IMR-90 (cell line): ENCODE measurements at regions of chr2 and their contacts with region 1.

Region 1: DNA sequence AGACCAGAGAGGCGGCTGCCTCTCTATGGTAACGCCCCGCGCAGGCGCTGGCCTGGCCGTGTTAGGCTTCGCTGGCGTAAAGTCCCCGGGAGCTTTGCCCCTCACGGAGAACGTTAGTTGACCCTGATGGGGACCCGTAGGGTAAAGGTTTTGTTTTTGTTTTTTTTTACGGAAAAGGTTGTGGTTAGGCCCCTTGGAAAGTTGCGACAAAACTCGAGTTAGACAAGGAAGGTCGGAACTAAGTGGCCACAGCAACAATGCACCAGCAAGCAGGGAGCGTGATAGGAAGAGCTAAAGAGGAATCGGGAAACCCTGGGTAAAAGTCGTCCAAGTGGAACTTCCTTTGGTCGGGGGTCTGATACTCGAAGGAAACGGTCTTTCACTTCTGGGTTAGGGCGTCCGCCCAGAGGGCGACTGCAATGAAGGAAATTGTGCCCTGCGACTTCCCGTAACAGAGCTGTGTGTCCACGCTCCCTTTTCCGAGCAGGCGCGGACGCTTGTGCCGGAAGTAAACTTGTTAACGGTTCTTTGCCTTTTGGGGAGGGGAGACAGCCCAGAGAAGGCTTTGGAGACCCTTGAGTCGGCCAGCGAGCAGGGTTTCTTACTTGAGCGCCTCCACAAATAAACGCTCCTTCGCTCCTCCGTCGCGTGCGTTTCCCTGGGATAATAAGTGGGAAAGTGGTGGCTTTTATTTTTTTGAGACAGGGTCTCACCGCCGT is 493 bp upstream of the CLASP1 start:
- DNase-seq: peak; percentile 97
- ATAC-seq: peak; percentile 97
- H3K4me3 ChIP-seq: peak overlapping the region; percentile 72
- H3K27ac ChIP-seq: peak overlapping the region; percentile 96
- H3K4me1 ChIP-seq: peaks cover 6% of the 10 kb centered on the region; the same call in 1 of the 2 replicates
- H3K27me3 ChIP-seq: no peaks in the 10 kb centered on the region
- CTCF ChIP-seq: 0 out of 2 replicates have a peak, but pooled peaks have one; percentile 3
- POLR2A ChIP-seq: peak; percentile 69
- RAD21 ChIP-seq: peak; percentile 10; the same call in 1 of the 2 replicates

Region 2: GRCh38 chr2:121596221-121597080 is 53.3 kb before region 1 on chr2:
- CTCF ChIA-PET with region 1: interaction called, 3 read pairs
- POLR2A ChIA-PET with region 1: no interaction called
- dilution Hi-C with region 1: no loop called
- in situ Hi-C with region 1: no loop called
- intact Hi-C with region 1: loop called (anchors 5 kb)
- DNase-seq: peak; percentile 57
- ATAC-seq: peak; percentile 90
- H3K4me3 ChIP-seq: peak overlapping the region; percentile 9; the same call in 1 of the 2 replicates
- H3K27ac ChIP-seq: peak overlapping the region; percentile 33; the same call in 1 of the 2 replicates
- H3K4me1 ChIP-seq: peaks cover 7% of the 10 kb centered on the region
- H3K27me3 ChIP-seq: no peaks in the 10 kb centered on the region
- CTCF ChIP-seq: peak; percentile 50
- POLR2A ChIP-seq: no peak
- RAD21 ChIP-seq: peak; percentile 54

Region 3: GRCh38 chr2:121634354-121635307 is 15.1 kb before region 1 on chr2:
- CTCF ChIA-PET with region 1: no interaction called
- POLR2A ChIA-PET with region 1: interaction called, 14 read pairs
- dilution Hi-C with region 1: no loop called
- in situ Hi-C with region 1: no loop called
- intact Hi-C with region 1: no loop called
- DNase-seq: peak; percentile 66
- ATAC-seq: peak; percentile 91
- H3K4me3 ChIP-seq: no peak overlapping the region
- H3K27ac ChIP-seq: peak overlapping the region; percentile 95
- H3K4me1 ChIP-seq: peaks cover 10% of the 10 kb centered on the region
- H3K27me3 ChIP-seq: no peaks in the 10 kb centered on the region
- CTCF ChIP-seq: no peak
- POLR2A ChIP-seq: no peak
- RAD21 ChIP-seq: no peak

Region 4: DNA sequence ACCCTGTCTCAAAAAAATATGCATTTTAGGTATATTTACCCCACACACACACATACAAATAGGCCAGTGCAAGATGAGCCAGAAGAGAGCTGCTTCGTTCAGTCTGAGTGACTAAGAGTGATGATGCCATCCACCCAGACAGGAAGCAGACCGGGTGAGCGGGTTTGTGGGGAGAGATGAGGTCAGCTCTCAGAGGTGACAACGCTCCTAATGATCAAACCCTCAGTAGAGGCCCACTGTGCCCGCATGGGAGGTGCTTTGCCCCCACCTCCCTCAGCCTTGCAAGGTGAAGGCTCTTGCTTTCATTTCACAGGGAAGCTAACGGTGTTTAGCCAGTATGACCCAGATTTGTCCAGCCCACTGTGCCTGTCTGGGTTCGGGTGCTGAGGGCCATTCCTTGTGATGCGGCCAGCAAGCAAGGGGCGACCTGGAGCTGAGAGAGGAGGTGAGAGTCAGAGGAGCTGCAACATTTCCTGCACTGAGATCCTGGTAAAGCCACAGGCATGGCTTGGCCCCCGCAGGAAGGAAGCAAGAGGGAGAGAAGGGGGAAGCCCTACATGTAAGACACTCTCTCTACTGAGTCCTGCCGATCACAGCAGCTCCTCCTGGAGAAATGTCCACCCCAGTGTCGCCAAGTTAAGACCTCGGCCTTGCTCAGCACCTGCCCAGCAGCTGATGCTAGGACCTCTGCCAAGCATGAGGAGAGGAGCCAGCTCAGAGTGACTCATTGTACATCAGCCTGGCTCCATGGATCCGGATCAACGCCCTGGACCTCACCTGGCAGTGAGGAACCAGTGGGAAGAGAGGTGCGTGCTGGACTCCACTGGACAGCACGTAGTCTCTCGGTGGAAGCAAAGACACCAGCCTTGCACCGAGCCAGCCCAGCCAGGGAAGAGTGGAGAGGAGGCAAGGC is 49.9 kb after region 1 on chr2:
- CTCF ChIA-PET with region 1: no interaction called
- POLR2A ChIA-PET with region 1: no interaction called
- dilution Hi-C with region 1: no loop called
- in situ Hi-C with region 1: no loop called
- intact Hi-C with region 1: loop called (anchors 5 kb)
- DNase-seq: peak; percentile 84
- ATAC-seq: peak; percentile 89
- H3K4me3 ChIP-seq: no peak overlapping the region
- H3K27ac ChIP-seq: no peak overlapping the region
- H3K4me1 ChIP-seq: peaks cover 10% of the 10 kb centered on the region
- H3K27me3 ChIP-seq: no peaks in the 10 kb centered on the region
- CTCF ChIP-seq: no peak
- POLR2A ChIP-seq: no peak
- RAD21 ChIP-seq: no peak

Region 5: DNA sequence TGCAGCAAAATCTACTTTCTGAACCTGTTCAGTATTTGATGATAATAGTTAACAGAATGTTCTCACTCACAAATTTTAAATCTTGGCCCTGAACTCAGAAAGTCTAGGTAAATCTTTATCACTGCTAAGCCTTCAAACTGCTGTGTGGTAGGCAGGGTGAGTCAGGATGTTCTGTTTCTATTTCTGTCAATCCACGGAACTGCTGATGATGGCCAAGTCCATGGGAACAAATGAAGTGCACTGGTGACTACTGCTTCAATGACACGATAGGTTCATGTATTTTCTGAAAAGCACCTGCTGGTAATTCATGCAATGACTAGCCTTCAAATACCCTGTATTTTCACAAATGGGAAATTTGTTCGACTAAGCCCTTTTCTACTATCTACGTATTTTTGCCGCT is 72.7 kb after region 1 on chr2:
- CTCF ChIA-PET with region 1: no interaction called
- POLR2A ChIA-PET with region 1: no interaction called
- dilution Hi-C with region 1: no loop called
- in situ Hi-C with region 1: no loop called
- intact Hi-C with region 1: loop called (anchors 2 kb)
- DNase-seq: peak; percentile 87
- ATAC-seq: peak; percentile 55
- H3K4me3 ChIP-seq: no peak overlapping the region
- H3K27ac ChIP-seq: peak overlapping the region; percentile 59; the same call in 1 of the 2 replicates
- H3K4me1 ChIP-seq: peaks cover 6% of the 10 kb centered on the region; the same call in 1 of the 2 replicates
- H3K27me3 ChIP-seq: no peaks in the 10 kb centered on the region
- CTCF ChIP-seq: no peak; the same call in 1 of the 2 replicates
- POLR2A ChIP-seq: no peak
- RAD21 ChIP-seq: no peak

Region 6: DNA sequence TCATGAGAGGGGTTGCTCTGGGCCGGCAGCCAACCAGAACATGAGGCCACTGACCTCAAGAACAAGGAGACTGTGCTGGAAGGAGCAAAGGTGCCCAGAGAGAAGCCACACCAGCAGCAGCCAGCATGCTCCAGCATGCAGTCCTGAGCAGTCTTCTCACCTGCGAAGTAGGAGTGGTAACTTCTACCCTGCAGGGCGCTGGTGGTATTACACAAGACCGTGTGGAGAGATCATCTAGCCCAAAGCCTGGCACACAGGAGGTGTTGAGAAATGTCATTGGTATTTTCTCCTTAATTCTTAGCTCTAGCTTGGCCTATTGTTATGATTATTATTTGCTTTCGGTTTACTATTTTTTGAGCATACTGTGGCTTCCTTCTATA is 238.4 kb after region 1 on chr2:
- CTCF ChIA-PET with region 1: no interaction called
- POLR2A ChIA-PET with region 1: no interaction called
- dilution Hi-C with region 1: no loop called
- in situ Hi-C with region 1: no loop called
- intact Hi-C with region 1: no loop called
- DNase-seq: no peak
- ATAC-seq: no peak; the same call in 1 of the 2 replicates
- H3K4me3 ChIP-seq: no peak overlapping the region
- H3K27ac ChIP-seq: no peak overlapping the region
- H3K4me1 ChIP-seq: no peaks in the 10 kb centered on the region
- H3K27me3 ChIP-seq: peaks cover 5% of the 10 kb centered on the region
- CTCF ChIP-seq: no peak
- POLR2A ChIP-seq: no peak
- RAD21 ChIP-seq: no peak